CD8-positive, alpha-beta T cell (primary cell): ENCODE measurements at regions of chr2 and their contacts with region 1.

Region 1: DNA sequence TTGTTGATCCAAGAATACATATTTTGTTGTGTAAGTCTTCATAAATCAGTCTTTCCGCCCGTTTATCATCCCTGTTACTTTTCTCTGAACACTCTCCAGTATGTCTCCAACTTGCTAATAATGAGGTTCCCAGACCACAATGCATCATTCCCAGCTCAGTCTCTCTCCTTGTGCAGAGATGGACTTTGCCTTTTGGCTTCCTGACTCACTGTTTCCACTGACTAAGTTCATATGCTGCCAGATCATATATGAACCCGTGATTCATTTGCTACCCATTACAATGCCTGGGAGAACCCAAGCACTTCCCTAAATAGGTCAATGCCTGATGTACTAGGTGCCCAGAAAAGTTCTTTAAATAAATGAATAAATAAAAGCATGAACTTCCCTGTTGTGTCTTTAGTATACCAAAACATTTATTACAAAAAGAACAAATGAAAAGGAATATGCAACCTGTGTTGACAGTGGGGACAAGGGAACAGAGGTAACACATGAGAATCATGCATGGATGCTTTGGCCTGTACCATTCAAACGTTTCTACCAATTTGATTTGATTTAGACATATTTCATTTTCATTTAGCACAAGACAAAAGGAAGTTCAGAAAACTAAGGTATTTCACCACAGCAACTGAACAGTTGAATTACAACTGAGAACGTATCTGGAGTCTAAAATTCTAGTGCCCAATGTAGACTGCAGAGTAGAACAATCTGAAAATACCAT is 215.4 kb upstream of the HNRNPA3 start:
- DNase-seq: peak in 2 of 9 experiments; percentile 6 to 36
- ATAC-seq: peak; percentile 34
- H3K4me3 ChIP-seq: peak overlapping the region; percentile 12 to 21
- H3K4me3 Mint-ChIP-seq: peak overlapping the region; percentile 44
- H3K27ac ChIP-seq: peak overlapping the region in 1 of 2 experiments; percentile 66
- H3K27ac Mint-ChIP-seq: peak overlapping the region; percentile 85
- H3K4me1 ChIP-seq: no peaks in the 10 kb centered on the region
- H3K4me1 Mint-ChIP-seq: peaks cover 23% of the 10 kb centered on the region
- H3K27me3 ChIP-seq: no peaks in the 10 kb centered on the region
- H3K27me3 Mint-ChIP-seq: no peaks in the 10 kb centered on the region
- CTCF ChIP-seq: no peak

Region 2: GRCh38 chr2:176280867-176281658 is 716.2 kb before region 1 on chr2:
- CTCF ChIA-PET with region 1: no interaction called
- POLR2A ChIA-PET with region 1: no interaction called
- intact Hi-C with region 1: loop called in 1 of 2 experiments (anchors 5 kb)
- DNase-seq: no peak
- ATAC-seq: no peak
- H3K4me3 ChIP-seq: no peak overlapping the region
- H3K4me3 Mint-ChIP-seq: no peak overlapping the region
- H3K27ac ChIP-seq: no peak overlapping the region
- H3K27ac Mint-ChIP-seq: no peak overlapping the region
- H3K4me1 ChIP-seq: peaks cover 17% of the 10 kb centered on the region
- H3K4me1 Mint-ChIP-seq: peaks cover 47% of the 10 kb centered on the region
- H3K27me3 ChIP-seq: no peaks in the 10 kb centered on the region
- H3K27me3 Mint-ChIP-seq: no peaks in the 10 kb centered on the region
- CTCF ChIP-seq: no peak